ENCODE measurements at regions of chrX and their contacts with region 1.

Region 1: DNA sequence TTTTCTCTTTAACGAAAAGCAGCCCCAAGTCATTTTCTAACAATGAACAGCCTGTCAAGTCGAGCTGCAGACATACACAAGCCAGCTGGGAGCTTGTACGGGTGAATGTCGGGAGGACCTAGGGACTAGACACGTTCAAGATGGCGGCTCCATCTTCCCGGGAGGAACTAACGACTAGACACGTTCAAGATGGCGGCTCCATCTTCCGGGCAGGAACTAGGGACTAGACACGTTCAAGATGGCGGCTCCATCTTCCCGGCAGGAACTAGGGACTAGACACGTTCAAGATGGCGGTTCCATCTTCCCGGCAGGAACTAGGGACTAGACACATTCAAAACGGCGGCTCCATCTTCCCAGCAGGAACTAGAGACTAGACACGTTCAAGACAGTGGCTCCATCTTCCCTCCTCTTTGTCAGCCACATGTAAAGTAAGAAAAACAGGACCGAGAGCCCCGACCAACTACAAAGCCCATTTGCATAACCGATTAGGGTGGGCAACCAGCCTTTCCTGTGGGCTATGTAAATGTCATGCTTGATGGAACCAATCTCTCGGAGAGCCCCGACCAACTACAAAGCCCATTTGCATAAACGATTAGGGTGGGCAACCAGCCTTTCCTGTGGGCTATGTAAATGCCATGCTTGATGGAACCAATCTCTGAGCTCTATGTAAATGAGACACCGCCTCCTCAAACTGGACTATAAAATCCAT is 175.5 kb downstream of the DHRSX start:
- DNase-seq: peak; percentile 78
- H3K4me3 ChIP-seq: peak overlapping the region in 3 of 4 donors; percentile 18 to 26 (median 19)
- H3K27ac ChIP-seq: peak overlapping the region in 3 of 4 donors; percentile 56 to 81 (median 56)
- H3K4me1 ChIP-seq: no peaks in the 10 kb centered on the region
- H3K27me3 ChIP-seq: no peaks in the 10 kb centered on the region
- CTCF ChIP-seq: no peak
- EP300 ChIP-seq: no peak
- POLR2A ChIP-seq: no peak

Region 2: GRCh38 chrX:989959-990510 is 1335.2 kb before region 1 on chrX:
- in situ Hi-C with region 1: no loop called
- intact Hi-C with region 1: loop called (anchors 10 kb)
- DNase-seq: peak; percentile 73
- H3K4me3 ChIP-seq: peak overlapping the region in 1 of 4 donors; percentile 14
- H3K27ac ChIP-seq: peak overlapping the region in 2 of 4 donors; percentile 33 to 46
- H3K4me1 ChIP-seq: no peaks in the 10 kb centered on the region
- H3K27me3 ChIP-seq: no peaks in the 10 kb centered on the region
- CTCF ChIP-seq: no peak
- EP300 ChIP-seq: no peak
- POLR2A ChIP-seq: no peak

Region 3: GRCh38 chrX:2243913-2244460 is 81.2 kb before region 1 on chrX:
- in situ Hi-C with region 1: no loop called
- intact Hi-C with region 1: no loop called
- DNase-seq: peak; percentile 11
- H3K4me3 ChIP-seq: no peak overlapping the region
- H3K27ac ChIP-seq: no peak overlapping the region
- H3K4me1 ChIP-seq: no peaks in the 10 kb centered on the region
- H3K27me3 ChIP-seq: no peaks in the 10 kb centered on the region
- CTCF ChIP-seq: no peak
- EP300 ChIP-seq: no peak
- POLR2A ChIP-seq: no peak

Measured in transverse colon (tissue), 4 donors.